Endothelial cell of umbilical vein (primary cell): ENCODE measurements at regions of chr2 and their contacts with region 1.

Region 1: GRCh38 chr2:168118733-168119514 is 128.5 kb downstream of the STK39 start:
- DNase-seq: peak; percentile 77
- H3K4me3 ChIP-seq: no peak overlapping the region
- H3K27ac ChIP-seq: no peak overlapping the region
- H3K4me1 ChIP-seq: peaks cover 11% of the 10 kb centered on the region
- H3K27me3 ChIP-seq: peaks cover 0 to 4% of the 10 kb centered on the region in 2 experiments
- CTCF ChIP-seq: peak; percentile 47 to 51
- POLR2A ChIP-seq: no peak

Region 2: GRCh38 chr2:167127135-167127534 is 991.8 kb before region 1 on chr2:
- CTCF ChIA-PET with region 1: interaction called, 26 read pairs
- POLR2A ChIA-PET with region 1: no interaction called
- dilution Hi-C with region 1: no loop called
- intact Hi-C with region 1: no loop called
- DNase-seq: peak; percentile 42
- H3K4me3 ChIP-seq: no peak overlapping the region
- H3K27ac ChIP-seq: no peak overlapping the region
- H3K4me1 ChIP-seq: no peaks in the 10 kb centered on the region
- H3K27me3 ChIP-seq: no peaks in the 10 kb centered on the region
- CTCF ChIP-seq: peak in 1 of 2 donors; percentile 10
- POLR2A ChIP-seq: no peak

Region 3: GRCh38 chr2:167264380-167264779 is 854.5 kb before region 1 on chr2:
- CTCF ChIA-PET with region 1: interaction called, 57 read pairs
- POLR2A ChIA-PET with region 1: no interaction called
- dilution Hi-C with region 1: no loop called
- intact Hi-C with region 1: loop called (anchors 1 kb)
- DNase-seq: peak; percentile 25
- H3K4me3 ChIP-seq: no peak overlapping the region
- H3K27ac ChIP-seq: no peak overlapping the region
- H3K4me1 ChIP-seq: no peaks in the 10 kb centered on the region
- H3K27me3 ChIP-seq: no peaks in the 10 kb centered on the region
- CTCF ChIP-seq: no peak
- POLR2A ChIP-seq: no peak

Region 4: DNA sequence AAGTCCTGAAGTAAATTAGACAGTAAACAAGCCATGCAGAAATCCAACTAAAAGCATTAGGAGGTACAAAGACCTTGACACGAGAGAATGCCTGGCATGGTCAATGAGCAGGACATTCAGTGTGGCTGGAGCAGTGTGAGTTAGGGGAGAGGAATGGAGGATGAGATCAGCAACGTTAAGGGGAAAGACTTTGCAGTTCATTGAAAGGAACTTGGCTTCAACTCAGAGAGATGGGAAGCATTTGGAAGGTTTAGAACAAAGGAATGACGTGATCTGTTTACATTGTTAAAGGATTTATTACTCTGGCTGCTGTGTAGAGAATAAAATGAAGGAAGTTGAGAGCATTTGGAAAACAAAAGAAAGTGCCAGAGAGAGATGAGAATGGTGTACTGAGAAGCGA is 609.3 kb before region 1 on chr2:
- CTCF ChIA-PET with region 1: no interaction called
- POLR2A ChIA-PET with region 1: no interaction called
- dilution Hi-C with region 1: no loop called
- intact Hi-C with region 1: loop called (anchors 10 kb)
- DNase-seq: peak; percentile 94
- H3K4me3 ChIP-seq: no peak overlapping the region
- H3K27ac ChIP-seq: peak overlapping the region; percentile 63
- H3K4me1 ChIP-seq: peaks cover 19% of the 10 kb centered on the region
- H3K27me3 ChIP-seq: no peaks in the 10 kb centered on the region
- CTCF ChIP-seq: no peak
- POLR2A ChIP-seq: no peak

Region 5: GRCh38 chr2:167964650-167965413 is 154.1 kb before region 1 on chr2:
- CTCF ChIA-PET with region 1: interaction called, 51 read pairs
- POLR2A ChIA-PET with region 1: no interaction called
- dilution Hi-C with region 1: no loop called
- intact Hi-C with region 1: loop called (anchors 1 kb)
- DNase-seq: peak; percentile 23
- H3K4me3 ChIP-seq: no peak overlapping the region
- H3K27ac ChIP-seq: no peak overlapping the region
- H3K4me1 ChIP-seq: no peaks in the 10 kb centered on the region
- H3K27me3 ChIP-seq: no peaks in the 10 kb centered on the region
- CTCF ChIP-seq: peak in 1 of 2 donors; percentile 9
- POLR2A ChIP-seq: no peak

Region 6: GRCh38 chr2:168107322-168107721 is 11.6 kb before region 1 on chr2:
- CTCF ChIA-PET with region 1: interaction called, 86 read pairs
- POLR2A ChIA-PET with region 1: no interaction called
- dilution Hi-C with region 1: no loop called
- intact Hi-C with region 1: no loop called
- DNase-seq: peak; percentile 34
- H3K4me3 ChIP-seq: no peak overlapping the region
- H3K27ac ChIP-seq: no peak overlapping the region
- H3K4me1 ChIP-seq: peaks cover 7% of the 10 kb centered on the region
- H3K27me3 ChIP-seq: peaks cover 0 to 2% of the 10 kb centered on the region in 2 experiments
- CTCF ChIP-seq: no peak
- POLR2A ChIP-seq: no peak

Region 7: GRCh38 chr2:168136392-168136977 is 17.6 kb after region 1 on chr2:
- CTCF ChIA-PET with region 1: interaction called, 42 read pairs
- POLR2A ChIA-PET with region 1: no interaction called
- dilution Hi-C with region 1: no loop called
- intact Hi-C with region 1: no loop called
- DNase-seq: peak; percentile 57
- H3K4me3 ChIP-seq: no peak overlapping the region
- H3K27ac ChIP-seq: no peak overlapping the region
- H3K4me1 ChIP-seq: peaks cover 9% of the 10 kb centered on the region
- H3K27me3 ChIP-seq: no peaks in the 10 kb centered on the region
- CTCF ChIP-seq: peak; percentile 19 to 36
- POLR2A ChIP-seq: no peak

Region 8: GRCh38 chr2:168712049-168712448 is 593.1 kb after region 1 on chr2:
- CTCF ChIA-PET with region 1: no interaction called
- POLR2A ChIA-PET with region 1: no interaction called
- dilution Hi-C with region 1: no loop called
- intact Hi-C with region 1: no loop called
- DNase-seq: no peak
- H3K4me3 ChIP-seq: no peak overlapping the region
- H3K27ac ChIP-seq: no peak overlapping the region
- H3K4me1 ChIP-seq: no peaks in the 10 kb centered on the region
- H3K27me3 ChIP-seq: no peaks in the 10 kb centered on the region
- CTCF ChIP-seq: no peak
- POLR2A ChIP-seq: no peak